ENCODE measurements at regions of chr11 and their contacts with region 1.

Region 1: DNA sequence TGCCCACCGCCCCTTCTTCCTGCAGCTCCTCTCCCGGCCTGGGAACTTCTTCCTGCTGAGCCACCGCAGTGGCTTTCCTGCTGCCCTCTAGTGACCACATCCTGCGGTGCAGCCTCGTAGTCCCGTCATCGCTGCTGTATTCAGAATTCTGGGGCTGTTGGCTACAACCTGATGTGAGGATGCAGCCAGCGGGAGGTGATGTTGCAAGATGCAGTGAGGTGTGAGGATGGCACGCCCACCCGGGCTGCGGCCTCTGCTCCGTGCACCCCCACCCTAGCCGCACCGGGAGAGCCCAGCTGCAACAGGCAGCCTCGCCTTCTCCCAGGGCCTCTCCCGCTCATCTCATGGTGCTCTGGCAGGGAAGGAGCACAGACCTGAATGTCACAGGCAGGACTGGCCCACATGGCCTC is 10.1 kb downstream of the CHST1 start:
- DNase-seq: peak; percentile 26
- H3K4me3 ChIP-seq: no peak overlapping the region
- H3K27ac ChIP-seq: no peak overlapping the region
- H3K27me3 ChIP-seq: peaks cover 2% of the 10 kb centered on the region
- CTCF ChIP-seq: peak; percentile 95

Region 2: GRCh38 chr11:45371251-45372115 is 283.9 kb before region 1 on chr11:
- CTCF ChIA-PET with region 1: interaction called, 142 read pairs
- POLR2A ChIA-PET with region 1: no interaction called
- DNase-seq: peak; percentile 7
- H3K4me3 ChIP-seq: no peak overlapping the region
- H3K27ac ChIP-seq: no peak overlapping the region
- H3K27me3 ChIP-seq: peaks cover 12% of the 10 kb centered on the region
- CTCF ChIP-seq: peak; percentile 88

Region 3: DNA sequence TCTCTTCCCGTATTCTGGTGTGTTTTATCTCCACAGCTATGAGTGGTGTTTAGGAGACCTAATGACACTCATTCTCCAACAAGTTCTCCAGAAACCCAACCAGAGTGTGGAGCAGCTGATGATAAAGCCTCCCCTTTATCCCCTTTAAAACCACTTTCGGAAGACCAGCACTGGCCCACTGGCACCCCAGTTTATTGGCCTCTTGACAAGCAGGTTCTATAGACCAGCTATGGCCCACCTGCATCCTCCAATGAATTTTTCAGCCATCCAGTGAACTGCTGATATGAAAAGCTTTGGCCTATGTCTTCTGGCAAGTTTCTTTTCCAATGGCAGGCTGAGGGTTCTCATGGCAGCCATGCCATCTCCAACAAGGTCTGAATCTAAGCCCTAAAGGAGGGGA is 17.3 kb before region 1 on chr11:
- CTCF ChIA-PET with region 1: interaction called, 18 read pairs
- POLR2A ChIA-PET with region 1: no interaction called
- DNase-seq: no peak
- H3K4me3 ChIP-seq: no peak overlapping the region
- H3K27ac ChIP-seq: no peak overlapping the region
- H3K27me3 ChIP-seq: no peaks in the 10 kb centered on the region
- CTCF ChIP-seq: no peak

Region 4: GRCh38 chr11:45665206-45665932 is 10.0 kb after region 1 on chr11 and contains the start of gene CHST1:
- CTCF ChIA-PET with region 1: interaction called, 13 read pairs
- POLR2A ChIA-PET with region 1: no interaction called
- DNase-seq: no peak
- H3K4me3 ChIP-seq: peak within 1 kb of the TSS; percentile 45
- H3K27ac ChIP-seq: no peak within 1 kb of the TSS
- H3K27me3 ChIP-seq: peaks cover 48% of the 10 kb centered on the region
- CTCF ChIP-seq: no peak
- polyA plus RNA-seq, gene CHST1: 0.06 and 0.16 TPM in 2 replicates

Region 5: DNA sequence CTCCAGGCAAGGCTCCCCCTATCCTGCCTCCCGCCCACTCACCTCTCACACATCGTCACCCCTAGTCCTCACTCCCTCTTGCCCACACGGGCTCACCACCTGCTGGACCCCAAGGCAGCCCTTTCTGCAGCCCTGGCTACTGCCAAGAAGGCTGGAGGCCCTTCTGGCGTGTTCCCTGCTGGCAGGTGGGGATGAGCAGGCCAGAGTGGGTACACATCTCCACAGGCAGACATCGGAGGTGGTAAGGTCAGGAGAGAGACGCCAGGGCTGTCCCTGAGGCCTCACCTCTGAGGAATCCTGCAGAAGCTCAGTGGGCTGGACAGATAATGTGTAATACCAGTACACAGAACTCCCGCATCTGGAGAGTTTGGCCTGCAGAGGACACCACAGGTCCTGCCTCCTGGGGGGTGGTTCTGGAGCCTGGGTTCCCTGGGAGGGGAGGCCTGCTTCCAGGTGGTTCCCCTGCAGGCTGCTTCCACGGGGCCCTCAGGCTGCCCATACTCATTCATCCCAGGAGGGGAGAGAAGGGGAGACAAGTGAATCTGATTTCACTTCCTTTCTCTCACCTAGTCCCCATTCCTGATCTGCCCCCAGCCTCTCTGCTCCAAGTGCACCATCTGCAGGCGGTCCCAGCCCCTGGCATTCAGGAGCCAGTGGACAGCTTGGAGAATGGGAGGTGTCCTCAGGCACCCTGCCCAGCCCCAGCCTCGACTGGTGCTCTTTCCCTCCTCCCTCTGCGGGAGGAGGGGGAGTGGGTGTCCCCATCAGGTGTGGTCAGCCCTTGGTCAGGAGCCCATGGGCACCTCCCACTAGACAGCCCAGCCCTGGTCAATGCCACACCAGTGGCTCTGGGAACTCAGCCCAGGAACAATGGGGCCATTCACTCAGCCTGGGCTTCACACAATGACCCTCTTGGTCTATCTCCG is 16.2 kb after region 1 on chr11:
- CTCF ChIA-PET with region 1: interaction called, 13 read pairs
- POLR2A ChIA-PET with region 1: no interaction called
- DNase-seq: no peak
- H3K4me3 ChIP-seq: no peak overlapping the region
- H3K27ac ChIP-seq: no peak overlapping the region
- H3K27me3 ChIP-seq: peaks cover 20% of the 10 kb centered on the region
- CTCF ChIP-seq: no peak

Measured in AG04450 (cell line).